ENCODE measurements at regions of chr11 and their contacts with region 1.

Region 1: GRCh38 chr11:60561254-60561653 is 46.1 kb downstream of the MS4A13 start:
- DNase-seq: no peak
- ATAC-seq: no peak
- H3K4me3 ChIP-seq: no peak overlapping the region
- H3K27ac ChIP-seq: no peak overlapping the region
- H3K4me1 ChIP-seq: no peaks in the 10 kb centered on the region
- H3K27me3 ChIP-seq: no peaks in the 10 kb centered on the region
- CTCF ChIP-seq: no peak

Region 2: GRCh38 chr11:60513496-60514460 is 47.5 kb before region 1 on chr11:
- CTCF ChIA-PET with region 1: no interaction called
- POLR2A ChIA-PET with region 1: interaction called, 15 read pairs
- in situ Hi-C with region 1: no loop called
- intact Hi-C with region 1: no loop called
- DNase-seq: no peak
- ATAC-seq: no peak
- H3K4me3 ChIP-seq: no peak overlapping the region
- H3K27ac ChIP-seq: no peak overlapping the region
- H3K4me1 ChIP-seq: no peaks in the 10 kb centered on the region
- H3K27me3 ChIP-seq: no peaks in the 10 kb centered on the region; the same call in 1 of the 2 replicates
- CTCF ChIP-seq: no peak